ENCODE measurements at regions of chr2 and their contacts with region 1.

Region 1: GRCh38 chr2:105521205-105521604 is 122.4 kb upstream of the FHL2 start:
- DNase-seq: no peak
- H3K4me3 ChIP-seq: no peak overlapping the region
- H3K27ac ChIP-seq: no peak overlapping the region
- H3K4me1 ChIP-seq: no peaks in the 10 kb centered on the region
- H3K27me3 ChIP-seq: no peaks in the 10 kb centered on the region
- CTCF ChIP-seq: peak; percentile 73

Region 2: GRCh38 chr2:105287692-105288091 is 233.5 kb before region 1 on chr2:
- intact Hi-C with region 1: loop called (anchors 5 kb)
- DNase-seq: peak; percentile 46
- H3K4me3 ChIP-seq: no peak overlapping the region
- H3K27ac ChIP-seq: no peak overlapping the region
- H3K4me1 ChIP-seq: no peaks in the 10 kb centered on the region
- H3K27me3 ChIP-seq: no peaks in the 10 kb centered on the region
- CTCF ChIP-seq: peak; percentile 29

Region 3: GRCh38 chr2:105344704-105345345 is 176.4 kb before region 1 on chr2:
- intact Hi-C with region 1: loop called (anchors 5 kb)
- DNase-seq: no peak
- H3K4me3 ChIP-seq: no peak overlapping the region
- H3K27ac ChIP-seq: no peak overlapping the region
- H3K4me1 ChIP-seq: no peaks in the 10 kb centered on the region
- H3K27me3 ChIP-seq: no peaks in the 10 kb centered on the region
- CTCF ChIP-seq: peak; percentile 37

Region 4: DNA sequence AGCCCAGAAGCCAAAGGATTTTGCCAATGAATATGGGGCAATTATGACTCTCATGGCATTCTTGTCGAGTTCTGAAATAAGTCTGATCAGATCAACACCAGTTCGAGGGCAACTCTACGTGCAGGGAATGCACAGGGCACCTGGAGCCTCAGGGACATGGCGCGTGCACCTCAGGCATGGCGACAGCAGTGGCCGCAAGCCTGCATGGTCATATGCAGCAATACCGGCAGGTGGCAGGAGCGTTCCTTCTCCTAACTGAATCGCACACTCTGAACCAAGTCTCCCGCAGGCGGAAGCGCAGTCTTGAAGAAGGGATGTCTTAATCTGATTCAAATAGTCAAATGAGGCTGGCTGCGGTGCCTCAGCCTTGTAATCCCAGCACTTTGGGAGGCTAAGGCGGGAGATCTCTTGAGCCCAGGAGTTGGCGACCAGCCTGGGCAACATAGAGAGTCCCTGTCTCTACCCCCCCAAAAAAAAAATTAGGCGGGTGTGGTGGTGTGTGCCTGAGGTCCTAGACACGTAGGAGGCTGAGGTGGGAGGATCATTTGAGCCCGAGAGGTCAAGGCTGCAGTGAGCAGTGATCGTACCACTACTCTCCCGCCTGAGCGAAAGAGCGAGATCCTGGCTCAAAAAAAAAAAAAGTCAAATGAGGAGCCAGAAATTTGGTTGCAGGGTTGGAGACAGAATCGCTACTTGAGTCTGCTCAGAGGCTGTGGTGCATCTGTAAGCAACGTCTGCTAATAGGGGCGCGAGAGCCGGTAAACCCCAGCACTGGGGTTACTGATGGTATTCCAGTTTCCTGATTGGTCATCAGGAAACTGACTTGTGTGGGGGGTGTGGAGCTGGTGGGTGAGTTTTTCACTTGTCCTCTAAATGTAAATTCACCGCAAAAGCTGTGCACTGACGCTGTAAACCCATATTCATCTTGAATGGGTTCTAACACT is 151.2 kb before region 1 on chr2:
- intact Hi-C with region 1: loop called (anchors 2 kb)
- DNase-seq: peak; percentile 90
- H3K4me3 ChIP-seq: no peak overlapping the region
- H3K27ac ChIP-seq: no peak overlapping the region
- H3K4me1 ChIP-seq: no peaks in the 10 kb centered on the region
- H3K27me3 ChIP-seq: no peaks in the 10 kb centered on the region
- CTCF ChIP-seq: peak; percentile 80